CD8-positive, alpha-beta memory T cell (primary cell): ENCODE measurements at regions of chrX and their contacts with region 1.

Region 1: GRCh38 chrX:72121383-72121782 is 10.3 kb downstream of the RTL5 start:
- DNase-seq: peak in 3 of 5 donors; percentile 23 to 72 (median 56)
- H3K4me3 ChIP-seq: no peak overlapping the region
- H3K4me3 Mint-ChIP-seq: peak overlapping the region in 6 of 7 donors; percentile 53 to 76 (median 68)
- H3K27ac ChIP-seq: peak overlapping the region; percentile 59
- H3K27ac Mint-ChIP-seq: peak overlapping the region; percentile 81 to 94 (median 90)
- H3K4me1 ChIP-seq: peaks cover 41% of the 10 kb centered on the region
- H3K4me1 Mint-ChIP-seq: peaks cover 70 to 72% (median 71%) of the 10 kb centered on the region in 3 donors
- H3K27me3 ChIP-seq: no peaks in the 10 kb centered on the region
- H3K27me3 Mint-ChIP-seq: peaks cover 0 to 19% of the 10 kb centered on the region in 2 donors

Region 2: GRCh38 chrX:72105436-72105835 is 15.9 kb before region 1 on chrX:
- CTCF ChIA-PET with region 1: interaction called, 4 read pairs
- POLR2A ChIA-PET with region 1: interaction called, 11 read pairs
- DNase-seq: peak; percentile 40 to 88 (median 69)
- H3K4me3 ChIP-seq: no peak overlapping the region
- H3K4me3 Mint-ChIP-seq: peak overlapping the region; percentile 59 to 87 (median 80)
- H3K27ac ChIP-seq: peak overlapping the region; percentile 93
- H3K27ac Mint-ChIP-seq: peak overlapping the region; percentile 92 to 99 (median 96)
- H3K4me1 ChIP-seq: peaks cover 42% of the 10 kb centered on the region
- H3K4me1 Mint-ChIP-seq: peaks cover 64 to 89% (median 82%) of the 10 kb centered on the region in 3 donors
- H3K27me3 ChIP-seq: no peaks in the 10 kb centered on the region
- H3K27me3 Mint-ChIP-seq: peaks cover 0 to 12% of the 10 kb centered on the region in 2 donors

Region 3: DNA sequence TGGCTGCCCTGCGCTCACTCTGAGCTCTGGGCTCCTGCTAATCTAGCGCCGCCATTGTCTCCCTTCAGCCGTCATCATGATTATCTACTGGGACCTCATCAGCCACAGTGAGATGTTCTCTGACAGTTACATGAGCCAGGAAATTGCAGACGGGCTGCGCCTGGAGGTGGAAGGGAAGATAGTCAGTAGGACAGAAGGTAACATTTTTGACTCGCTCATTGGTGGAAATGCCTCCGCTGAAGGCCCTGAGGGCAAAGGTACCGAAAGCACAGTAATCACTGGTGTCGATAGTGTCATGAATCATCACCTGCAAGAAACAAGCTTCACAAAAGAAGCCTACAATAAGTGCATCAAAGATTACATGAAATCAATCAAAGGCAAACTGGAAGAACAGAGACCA is 38.4 kb after region 1 on chrX:
- CTCF ChIA-PET with region 1: no interaction called
- POLR2A ChIA-PET with region 1: no interaction called
- DNase-seq: no peak
- H3K4me3 ChIP-seq: no peak overlapping the region
- H3K4me3 Mint-ChIP-seq: no peak overlapping the region
- H3K27ac ChIP-seq: no peak overlapping the region
- H3K27ac Mint-ChIP-seq: no peak overlapping the region
- H3K4me1 ChIP-seq: no peaks in the 10 kb centered on the region
- H3K4me1 Mint-ChIP-seq: no peaks in the 10 kb centered on the region
- H3K27me3 ChIP-seq: no peaks in the 10 kb centered on the region
- H3K27me3 Mint-ChIP-seq: peaks cover 11 to 12% of the 10 kb centered on the region in 2 donors